K562 (cell line): ENCODE measurements at regions of chr16 and their contacts with region 1.

Region 1: DNA sequence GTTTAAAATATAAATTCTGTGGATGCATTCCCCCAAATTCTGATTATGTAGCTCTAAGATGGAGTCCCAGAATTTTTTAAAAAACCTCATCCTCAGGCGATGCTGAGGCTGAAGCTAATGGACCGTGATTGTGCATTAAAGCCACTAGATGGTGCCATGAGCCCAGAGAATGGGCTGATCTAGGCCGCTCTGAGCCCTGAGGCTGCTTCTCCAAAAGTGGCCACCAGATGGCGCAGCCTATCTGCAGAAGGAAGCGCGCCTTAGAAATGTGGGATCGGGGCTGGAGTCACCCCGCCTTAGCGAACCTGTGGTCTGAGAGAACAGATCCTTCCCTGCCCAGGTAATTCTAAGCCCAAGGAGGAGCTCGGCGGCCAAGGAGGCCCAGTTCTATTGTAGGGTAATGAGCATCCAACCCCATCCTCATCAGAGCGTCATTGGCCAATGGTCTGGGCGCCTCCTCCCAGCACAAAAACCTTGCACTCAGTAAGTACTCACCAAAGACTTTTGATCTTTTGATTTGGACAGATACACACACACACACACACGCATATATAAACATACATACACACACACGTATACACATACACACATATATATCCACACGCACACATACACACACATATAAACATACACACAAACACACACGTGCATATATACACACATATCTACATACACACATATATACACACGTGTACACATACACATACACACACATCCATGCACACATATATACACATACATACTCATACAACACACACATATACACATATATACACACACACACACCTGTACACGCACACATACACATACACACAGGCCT is 13.7 kb upstream of the MMP2 start:
- DNase-seq: peak; percentile 81 to 91 (median 90)
- ATAC-seq: peak; percentile 97
- H3K4me3 ChIP-seq: no peak overlapping the region
- H3K27ac ChIP-seq: no peak overlapping the region
- H3K4me1 ChIP-seq: no peaks in the 10 kb centered on the region
- H3K27me3 ChIP-seq: peaks cover 3 to 17% of the 10 kb centered on the region in 2 experiments; a peak in 3 of 5 replicates
- CTCF ChIP-seq: peak; percentile 100
- EP300 ChIP-seq: no peak
- POLR2A ChIP-seq: no peak
- RAD21 ChIP-seq: peak; percentile 99 to 100

Region 2: GRCh38 chr16:55389426-55390073 is 75.7 kb before region 1 on chr16:
- CTCF ChIA-PET with region 1: no interaction called
- POLR2A ChIA-PET with region 1: no interaction called
- in situ Hi-C with region 1: no loop called
- intact Hi-C with region 1: no loop called
- DNase-seq: no peak
- ATAC-seq: no peak
- H3K4me3 ChIP-seq: no peak overlapping the region
- H3K27ac ChIP-seq: no peak overlapping the region
- H3K4me1 ChIP-seq: no peaks in the 10 kb centered on the region
- H3K27me3 ChIP-seq: peaks cover 0 to 9% of the 10 kb centered on the region in 2 experiments; a peak in 4 of 5 replicates
- CTCF ChIP-seq: no peak
- EP300 ChIP-seq: no peak
- POLR2A ChIP-seq: no peak
- RAD21 ChIP-seq: no peak

Region 3: DNA sequence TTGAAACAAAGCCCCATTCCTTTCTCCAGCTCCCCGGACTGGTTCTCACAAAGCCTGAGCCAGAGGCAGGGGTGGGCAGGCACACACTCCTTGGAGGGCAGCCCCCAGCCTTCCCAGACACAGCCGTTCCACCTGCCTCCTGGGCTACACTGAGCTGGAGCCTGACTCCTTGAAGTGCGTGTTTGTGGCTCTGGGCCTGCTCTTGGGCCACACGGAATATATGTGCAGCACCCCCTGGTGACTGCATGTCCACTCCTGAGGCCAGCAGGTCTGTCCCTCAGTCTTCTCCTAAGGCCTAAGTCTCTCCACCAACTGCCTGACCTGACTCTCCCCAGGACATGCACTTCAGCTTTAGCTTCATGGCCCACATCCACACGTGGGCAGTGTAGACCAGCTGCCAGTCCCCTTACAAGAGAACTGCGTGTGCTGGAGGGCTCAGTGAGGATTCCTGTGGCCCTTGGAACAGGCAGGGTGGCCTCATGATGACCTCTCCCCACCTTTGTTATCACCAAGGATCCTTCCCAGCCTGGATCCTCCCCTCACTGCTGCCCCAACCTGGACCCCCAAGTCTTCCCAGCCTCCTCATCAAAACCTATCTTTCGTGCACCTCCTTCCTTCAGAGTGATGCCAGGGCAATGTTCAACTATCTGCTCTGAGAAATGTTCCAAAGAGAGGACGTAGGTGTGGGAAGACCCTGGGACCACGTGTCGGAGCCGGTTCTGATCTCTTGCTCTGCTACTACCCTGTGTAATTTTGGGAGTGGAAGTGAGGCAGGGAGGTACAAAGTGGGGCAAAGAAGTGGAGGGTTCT is 178.1 kb after region 1 on chr16:
- CTCF ChIA-PET with region 1: interaction called, 10 read pairs
- POLR2A ChIA-PET with region 1: no interaction called
- in situ Hi-C with region 1: no loop called
- intact Hi-C with region 1: loop called (anchors 5 kb)
- DNase-seq: peak in 2 of 4 experiments; percentile 37 to 55
- ATAC-seq: peak; percentile 94
- H3K4me3 ChIP-seq: no peak overlapping the region
- H3K27ac ChIP-seq: no peak overlapping the region
- H3K4me1 ChIP-seq: no peaks in the 10 kb centered on the region
- H3K27me3 ChIP-seq: peaks cover 7 to 17% of the 10 kb centered on the region in 2 experiments; a peak in 3 of 5 replicates
- CTCF ChIP-seq: peak; percentile 51 to 56 (median 54); a peak in 5 of 6 replicates
- EP300 ChIP-seq: no peak
- POLR2A ChIP-seq: no peak
- RAD21 ChIP-seq: peak; percentile 51 to 78; a peak in 3 of 4 replicates

Region 4: DNA sequence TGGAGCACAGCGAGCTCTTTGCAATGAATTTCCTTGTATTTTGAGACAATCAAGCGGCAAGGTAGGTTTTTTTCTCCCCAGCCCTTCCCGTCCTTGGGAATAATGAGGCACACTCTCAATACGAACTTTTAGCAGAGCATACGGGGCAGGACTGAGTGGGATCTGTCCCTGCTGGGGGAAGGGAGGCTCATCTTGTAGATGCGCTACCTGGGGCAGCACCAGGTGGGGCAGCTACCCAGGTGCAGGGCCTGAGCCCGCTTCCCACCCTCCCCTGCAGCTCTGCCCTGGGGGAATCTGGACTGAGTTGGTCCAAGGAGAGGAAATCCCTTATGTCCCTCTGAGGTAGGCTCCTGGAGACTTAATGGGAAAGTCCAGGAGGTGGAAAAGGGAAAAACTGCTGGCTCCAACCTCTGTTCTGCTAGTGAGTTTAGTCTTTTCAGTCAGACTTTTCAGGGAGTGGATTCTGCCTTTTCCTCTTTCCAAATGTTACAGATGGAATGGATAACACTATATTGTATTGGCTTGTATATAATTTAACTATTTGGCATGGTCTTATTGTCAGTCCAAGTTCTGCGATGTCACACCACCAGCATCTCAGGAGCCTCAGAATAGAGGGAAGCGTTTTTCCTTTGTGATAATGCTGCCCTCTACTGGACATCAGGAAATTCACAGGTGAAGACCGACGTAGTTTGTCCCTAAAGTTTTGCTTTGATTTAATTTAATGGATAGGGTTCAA is 377.2 kb after region 1 on chr16:
- CTCF ChIA-PET with region 1: interaction called, 16 read pairs
- POLR2A ChIA-PET with region 1: no interaction called
- in situ Hi-C with region 1: loop called (anchors 5 kb)
- intact Hi-C with region 1: loop called (anchors 1 kb)
- DNase-seq: peak; percentile 59 to 61 (median 60)
- ATAC-seq: peak; percentile 85
- H3K4me3 ChIP-seq: no peak overlapping the region
- H3K27ac ChIP-seq: no peak overlapping the region
- H3K4me1 ChIP-seq: no peaks in the 10 kb centered on the region
- H3K27me3 ChIP-seq: peaks cover 0 to 7% of the 10 kb centered on the region in 2 experiments; a peak in 2 of 5 replicates
- CTCF ChIP-seq: peak; percentile 65 to 85 (median 67)
- EP300 ChIP-seq: no peak
- POLR2A ChIP-seq: no peak
- RAD21 ChIP-seq: peak; percentile 82 to 86

Region 5: DNA sequence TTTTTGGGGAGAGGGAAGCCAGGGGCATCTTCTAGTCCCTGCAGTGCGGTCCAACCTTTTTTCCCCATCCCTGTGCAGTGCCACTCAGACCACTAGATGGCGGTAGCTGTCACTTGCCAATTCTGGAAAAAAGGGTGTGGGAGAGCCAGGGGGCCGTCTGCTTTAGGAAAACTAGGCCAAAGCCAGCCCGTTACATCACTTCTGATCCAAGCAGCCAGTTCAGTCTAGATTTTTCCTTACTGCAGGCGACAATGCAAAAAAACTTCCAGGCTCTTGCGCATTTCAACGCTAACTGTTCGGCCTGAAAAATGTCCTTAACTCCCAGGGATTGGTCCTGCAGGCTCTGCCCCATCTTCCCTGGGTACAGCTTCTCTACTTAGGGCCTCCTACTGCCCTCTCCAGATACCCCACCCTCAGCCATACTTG is 479.1 kb after region 1 on chr16:
- CTCF ChIA-PET with region 1: no interaction called
- POLR2A ChIA-PET with region 1: no interaction called
- in situ Hi-C with region 1: no loop called
- intact Hi-C with region 1: loop called (anchors 10 kb)
- DNase-seq: peak; percentile 64 to 69 (median 66)
- ATAC-seq: peak; percentile 94
- H3K4me3 ChIP-seq: no peak overlapping the region
- H3K27ac ChIP-seq: no peak overlapping the region
- H3K4me1 ChIP-seq: no peaks in the 10 kb centered on the region; a peak in 1 of 5 replicates
- H3K27me3 ChIP-seq: no peaks in the 10 kb centered on the region
- CTCF ChIP-seq: peak; percentile 76 to 92 (median 89)
- EP300 ChIP-seq: no peak
- POLR2A ChIP-seq: no peak
- RAD21 ChIP-seq: peak; percentile 78 to 79